B cell (primary cell): ENCODE measurements at regions of chr19 and their contacts with region 1.

Region 1: DNA sequence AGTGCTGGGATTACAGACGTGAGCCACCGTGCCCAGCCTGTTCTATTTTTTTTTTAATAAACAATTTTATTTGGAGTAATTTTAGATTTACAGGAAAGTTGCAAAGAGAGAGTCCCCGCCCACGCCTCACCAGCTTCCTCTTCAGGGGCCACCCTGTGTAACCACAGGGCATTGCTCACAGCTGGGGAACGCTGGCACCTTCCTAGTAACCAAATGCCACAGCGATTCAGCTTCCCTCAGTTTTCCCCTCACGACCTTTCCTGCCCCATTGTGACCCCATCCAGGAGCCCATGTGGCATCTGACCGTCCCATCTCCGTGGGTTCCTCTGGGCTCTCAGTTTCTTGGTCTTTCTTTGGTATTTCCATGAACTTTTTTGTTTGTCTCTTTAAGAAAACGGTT is 83.9 kb downstream of the GNG7 start:
- DNase-seq: peak; percentile 83
- ATAC-seq: peak; percentile 29
- H3K4me3 ChIP-seq: peak overlapping the region in 3 of 5 experiments; percentile 25 to 47 (median 29)
- H3K4me3 Mint-ChIP-seq: peak overlapping the region; percentile 79
- H3K27ac ChIP-seq: peak overlapping the region; percentile 78 to 79
- H3K27ac Mint-ChIP-seq: peak overlapping the region; percentile 95
- H3K4me1 ChIP-seq: peaks cover 83 to 93% of the 10 kb centered on the region in 2 donors
- H3K4me1 Mint-ChIP-seq: peaks cover 82% of the 10 kb centered on the region
- H3K27me3 ChIP-seq: no peaks in the 10 kb centered on the region
- H3K27me3 Mint-ChIP-seq: no peaks in the 10 kb centered on the region
- CTCF ChIP-seq: no peak

Region 2: DNA sequence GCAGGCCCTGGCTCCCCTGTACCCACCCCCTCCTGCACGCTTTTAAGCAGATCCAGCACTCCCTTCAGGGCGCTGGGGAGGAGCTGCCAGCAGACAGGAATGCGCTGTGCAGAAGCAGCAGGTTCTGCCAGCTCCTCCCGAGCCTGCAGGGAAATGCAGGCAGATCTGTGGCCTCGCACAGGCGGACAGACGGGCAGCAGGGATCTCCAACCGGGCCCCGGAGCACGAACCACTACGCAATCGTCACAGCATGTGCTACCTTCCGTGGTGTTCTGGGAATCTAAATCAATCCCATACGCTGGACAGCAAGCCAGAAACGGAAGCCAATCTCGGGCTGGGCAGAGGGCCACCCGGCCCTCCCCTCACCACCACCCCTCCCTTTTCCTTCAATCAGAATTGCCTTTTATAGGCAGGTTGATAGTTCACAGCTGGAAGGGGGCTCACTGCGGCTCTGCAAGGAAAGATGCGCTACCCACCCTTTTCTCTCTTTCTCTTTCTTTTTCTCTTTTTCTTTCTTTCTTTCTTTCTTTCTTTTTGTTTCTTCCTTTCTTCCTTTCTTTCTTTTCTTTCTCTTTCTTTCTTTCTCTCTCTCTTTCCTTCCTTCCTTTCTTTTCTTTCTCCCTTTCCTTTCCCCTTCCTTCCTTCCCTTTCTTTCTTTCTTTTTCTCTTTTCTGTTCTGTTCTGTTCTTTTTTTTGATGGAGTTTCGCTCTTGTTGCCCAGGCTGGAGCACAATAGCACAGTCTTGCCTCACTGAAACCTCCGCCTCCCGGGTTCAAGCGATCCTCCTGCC is 16.0 kb before region 1 on chr19:
- CTCF ChIA-PET with region 1: interaction called, 593 read pairs
- POLR2A ChIA-PET with region 1: interaction called, 3 read pairs
- intact Hi-C with region 1: no loop called
- DNase-seq: no peak
- ATAC-seq: no peak
- H3K4me3 ChIP-seq: no peak overlapping the region
- H3K4me3 Mint-ChIP-seq: no peak overlapping the region
- H3K27ac ChIP-seq: no peak overlapping the region
- H3K27ac Mint-ChIP-seq: no peak overlapping the region
- H3K4me1 ChIP-seq: peaks cover 12 to 26% of the 10 kb centered on the region in 2 donors
- H3K4me1 Mint-ChIP-seq: peaks cover 35% of the 10 kb centered on the region
- H3K27me3 ChIP-seq: no peaks in the 10 kb centered on the region
- H3K27me3 Mint-ChIP-seq: no peaks in the 10 kb centered on the region
- CTCF ChIP-seq: no peak

Region 3: GRCh38 chr19:3047425-3048189 is 429.0 kb after region 1 on chr19:
- CTCF ChIA-PET with region 1: no interaction called
- POLR2A ChIA-PET with region 1: interaction called, 11 read pairs
- intact Hi-C with region 1: no loop called
- DNase-seq: peak; percentile 67
- ATAC-seq: peak; percentile 79
- H3K4me3 ChIP-seq: peak overlapping the region; percentile 33 to 64 (median 48)
- H3K4me3 Mint-ChIP-seq: peak overlapping the region; percentile 92
- H3K27ac ChIP-seq: no peak overlapping the region
- H3K27ac Mint-ChIP-seq: peak overlapping the region; percentile 86
- H3K4me1 ChIP-seq: peaks cover 8 to 18% of the 10 kb centered on the region in 2 donors
- H3K4me1 Mint-ChIP-seq: peaks cover 19% of the 10 kb centered on the region
- H3K27me3 ChIP-seq: no peaks in the 10 kb centered on the region
- H3K27me3 Mint-ChIP-seq: peaks cover 2% of the 10 kb centered on the region
- CTCF ChIP-seq: no peak